MCF 10A (cell line): ENCODE measurements at regions of chr11 and their contacts with region 1.

Region 1: DNA sequence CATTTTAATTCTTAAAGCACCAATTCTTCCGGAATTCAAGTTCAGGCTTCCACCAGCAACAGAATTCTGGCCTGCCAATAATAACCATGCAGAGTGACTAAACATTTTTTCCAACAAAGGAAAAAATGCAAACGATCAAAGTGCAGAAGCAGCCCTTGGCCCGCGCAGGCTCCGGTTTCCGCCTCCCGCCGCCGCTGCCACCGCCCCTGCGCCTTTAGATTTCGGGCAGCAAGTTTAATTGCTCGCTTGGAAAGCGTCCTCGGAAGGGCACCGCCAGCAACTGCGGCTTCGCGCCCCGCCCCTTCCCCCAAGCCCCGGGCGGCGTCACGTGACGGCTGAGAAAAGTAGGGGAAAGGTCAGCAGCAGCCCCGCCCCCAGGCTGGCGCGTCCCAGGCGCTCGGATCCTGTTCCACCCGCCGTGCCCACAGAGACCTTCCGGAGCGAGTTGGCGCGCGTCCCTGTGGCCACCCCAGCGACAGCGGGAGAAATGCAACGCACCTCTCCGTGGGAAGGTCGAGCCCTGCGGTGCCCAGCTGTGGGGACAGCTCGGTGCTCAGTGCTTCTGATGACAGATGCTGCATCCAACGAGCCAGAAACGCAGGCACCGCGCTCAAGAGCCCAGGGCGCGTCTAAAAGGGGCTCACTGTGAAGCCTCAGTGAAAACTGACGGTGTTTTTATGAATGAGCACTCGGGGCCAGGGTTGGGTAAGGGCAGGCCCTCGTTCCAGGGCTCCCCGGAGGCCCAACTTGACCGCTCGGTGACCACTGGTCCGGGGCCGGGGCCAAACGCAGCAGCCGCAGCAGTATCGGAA is 2.5 kb downstream of the CPT1A start:
- DNase-seq: peak; percentile 93
- H3K4me3 Mint-ChIP-seq: peak overlapping the region; percentile 73
- H3K27ac Mint-ChIP-seq: peak overlapping the region; percentile 27
- H3K4me1 Mint-ChIP-seq: peaks cover 24% of the 10 kb centered on the region
- H3K27me3 Mint-ChIP-seq: no peaks in the 10 kb centered on the region
- CTCF ChIP-seq: no peak

Region 2: DNA sequence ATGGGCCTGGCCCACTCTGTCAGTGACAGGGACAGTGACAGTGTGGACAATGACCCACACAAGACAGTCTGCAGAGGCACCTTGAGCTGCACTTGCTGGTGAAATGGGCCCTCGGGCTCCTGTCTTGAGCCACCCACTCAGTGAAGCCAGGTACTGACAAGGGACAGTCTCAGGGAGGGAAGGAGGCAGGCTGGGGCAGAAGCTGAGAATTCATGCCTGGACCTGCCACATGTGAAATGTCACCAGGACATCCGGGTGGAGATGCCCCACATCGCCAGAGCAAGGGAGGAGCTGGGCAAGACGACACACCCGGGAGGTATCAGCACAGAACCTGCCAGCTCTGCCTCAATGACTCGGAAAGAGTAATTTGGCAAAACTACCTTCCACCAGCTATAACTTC is 21.1 kb before region 1 on chr11:
- CTCF ChIA-PET with region 1: interaction called, 5 read pairs
- POLR2A ChIA-PET with region 1: interaction called, 13 read pairs
- intact Hi-C with region 1: no loop called
- DNase-seq: peak; percentile 19
- H3K4me3 Mint-ChIP-seq: no peak overlapping the region
- H3K27ac Mint-ChIP-seq: peak overlapping the region; percentile 84
- H3K4me1 Mint-ChIP-seq: peaks cover 12% of the 10 kb centered on the region
- H3K27me3 Mint-ChIP-seq: no peaks in the 10 kb centered on the region
- CTCF ChIP-seq: no peak

Region 3: DNA sequence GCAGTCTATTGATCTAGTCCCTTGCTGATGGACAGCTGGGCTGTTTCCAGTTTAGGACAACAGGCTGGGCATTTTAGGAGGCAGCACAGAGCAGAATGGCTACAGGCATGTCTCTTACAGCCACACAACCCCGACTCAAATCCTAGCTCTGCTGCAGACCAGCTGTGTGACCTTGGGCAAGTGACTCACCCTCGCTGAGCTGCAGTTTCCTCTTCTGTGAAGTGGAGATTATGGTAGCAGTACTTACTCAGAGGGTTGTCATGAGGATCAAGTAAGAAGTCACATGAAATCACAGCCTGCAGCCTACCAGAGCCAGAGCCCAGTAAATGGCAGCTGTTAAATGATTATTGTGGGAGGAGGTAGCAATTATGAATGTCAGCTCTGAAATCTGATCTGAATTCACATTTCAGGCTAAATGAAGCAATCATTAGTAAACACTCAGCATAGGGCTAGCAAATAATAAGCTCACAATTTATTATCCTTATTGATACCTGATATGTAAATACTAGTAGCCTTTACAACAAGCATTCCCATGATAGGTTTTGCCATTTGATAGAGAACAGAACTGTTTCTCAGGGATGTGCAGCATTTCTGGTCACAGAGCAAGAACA is 513.6 kb after region 1 on chr11:
- CTCF ChIA-PET with region 1: no interaction called
- POLR2A ChIA-PET with region 1: no interaction called
- intact Hi-C with region 1: no loop called
- DNase-seq: peak; percentile 71
- H3K4me3 Mint-ChIP-seq: no peak overlapping the region
- H3K27ac Mint-ChIP-seq: no peak overlapping the region
- H3K4me1 Mint-ChIP-seq: peaks cover 21% of the 10 kb centered on the region
- H3K27me3 Mint-ChIP-seq: no peaks in the 10 kb centered on the region
- CTCF ChIP-seq: no peak